ENCODE measurements at regions of chr17 and their contacts with region 1.

Region 1: GRCh38 chr17:40168262-40168832 is 8.9 kb upstream of the RAPGEFL1 start:
- DNase-seq: no peak
- H3K4me3 Mint-ChIP-seq: no peak overlapping the region
- H3K27ac Mint-ChIP-seq: no peak overlapping the region
- H3K4me1 Mint-ChIP-seq: peaks cover 15% of the 10 kb centered on the region
- H3K27me3 Mint-ChIP-seq: no peaks in the 10 kb centered on the region

Region 2: DNA sequence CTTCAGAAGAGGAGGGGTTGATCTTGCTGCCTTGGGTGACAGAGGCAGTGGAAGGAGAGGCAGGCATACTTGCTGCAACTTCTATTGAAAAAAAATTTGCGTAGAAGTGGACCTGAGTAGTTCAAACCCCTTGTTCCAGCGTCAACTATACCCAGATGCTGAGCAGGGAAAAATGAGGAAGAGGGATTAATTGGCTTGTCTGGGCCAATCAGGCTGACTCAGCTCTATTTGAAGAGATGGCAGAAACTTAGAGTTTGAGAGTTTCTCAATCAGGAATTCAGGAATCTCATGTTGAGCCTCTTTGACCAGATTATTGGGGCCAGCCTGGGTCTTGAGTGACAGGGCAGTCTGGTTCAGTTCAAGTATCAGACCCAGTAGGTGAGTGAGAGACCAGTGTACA is 10.4 kb before region 1 on chr17:
- intact Hi-C with region 1: loop called (anchors 1 kb)
- DNase-seq: no peak
- H3K4me3 Mint-ChIP-seq: no peak overlapping the region
- H3K27ac Mint-ChIP-seq: no peak overlapping the region
- H3K4me1 Mint-ChIP-seq: peaks cover 17% of the 10 kb centered on the region
- H3K27me3 Mint-ChIP-seq: no peaks in the 10 kb centered on the region

Measured in activated T-helper 2 cell treated with anti-CD3 and anti-CD28 coated beads, Interferon-gamma antibody, Interleukin-2, Interleukin-4, amounts not matched to agents 10 μg/mL and 5 μg/mL and 100 μg/mL, durations not matched to agents 14 hours and 24 hours and 36 hours (primary cell).